ENCODE measurements at regions of chr2 and their contacts with region 1.

Region 1: GRCh38 chr2:74529357-74530238 is at the starts of genes AUP1 and HTRA2:
- DNase-seq: peak; percentile 89 to 99 (median 95)
- ATAC-seq: peak; percentile 94
- H3K4me3 ChIP-seq: peak within 1 kb of the TSS; percentile 96
- H3K27ac ChIP-seq: peak within 1 kb of the TSS; percentile 94
- H3K4me1 ChIP-seq: peaks cover 28 to 35% of the 10 kb centered on the region in 2 experiments
- H3K27me3 ChIP-seq: no peaks in the 10 kb centered on the region
- CTCF ChIP-seq: no peak
- EP300 ChIP-seq: 0 out of 2 replicates have a peak, but pooled peaks have one; percentile 15
- POLR2A ChIP-seq: peak; percentile 95
- RAD21 ChIP-seq: no peak
- polyA plus RNA-seq, gene AUP1: 70.7 to 113 TPM
- polyA plus RNA-seq, gene HTRA2: 66.7 to 71.2 TPM

Region 2: GRCh38 chr2:74250189-74250631 is 279.4 kb before region 1 on chr2:
- CTCF ChIA-PET with region 1: interaction called, 8 read pairs
- POLR2A ChIA-PET with region 1: no interaction called
- in situ Hi-C with region 1: no loop called
- intact Hi-C with region 1: loop called (anchors 5 kb)
- DNase-seq: peak; percentile 72 to 76 (median 75)
- ATAC-seq: peak; percentile 88
- H3K4me3 ChIP-seq: no peak overlapping the region
- H3K27ac ChIP-seq: no peak overlapping the region
- H3K4me1 ChIP-seq: peaks cover 0 to 3% of the 10 kb centered on the region in 2 experiments; a peak in 2 of 5 replicates
- H3K27me3 ChIP-seq: peaks cover 9 to 40% of the 10 kb centered on the region in 2 experiments; a peak in 4 of 5 replicates
- CTCF ChIP-seq: peak; percentile 75 to 87 (median 86)
- EP300 ChIP-seq: no peak; the same call in 1 of the 2 replicates
- POLR2A ChIP-seq: no peak
- RAD21 ChIP-seq: peak; percentile 72 to 89

Region 3: GRCh38 chr2:74458132-74458925 is 71.3 kb before region 1 on chr2 and contains the start of gene WBP1:
- CTCF ChIA-PET with region 1: no interaction called
- POLR2A ChIA-PET with region 1: interaction called, 12 read pairs
- in situ Hi-C with region 1: no loop called
- intact Hi-C with region 1: loop called (anchors 1 kb)
- DNase-seq: peak; percentile 80 to 98 (median 88)
- ATAC-seq: peak; percentile 90
- H3K4me3 ChIP-seq: peak within 1 kb of the TSS; percentile 53
- H3K27ac ChIP-seq: peak within 1 kb of the TSS; percentile 31; the same call in 1 of the 3 replicates
- H3K4me1 ChIP-seq: peaks cover 7 to 33% of the 10 kb centered on the region in 2 experiments
- H3K27me3 ChIP-seq: no peaks in the 10 kb centered on the region
- CTCF ChIP-seq: no peak
- EP300 ChIP-seq: no peak
- POLR2A ChIP-seq: peak; percentile 66
- RAD21 ChIP-seq: no peak
- polyA plus RNA-seq, gene WBP1: 1.9 to 2.1 TPM

Region 4: GRCh38 chr2:74507145-74507925 is 22.3 kb before region 1 on chr2 and contains the start of gene PCGF1:
- CTCF ChIA-PET with region 1: no interaction called
- POLR2A ChIA-PET with region 1: interaction called, 17 read pairs
- in situ Hi-C with region 1: no loop called
- intact Hi-C with region 1: loop called (anchors 1 kb)
- DNase-seq: peak; percentile 95 to 99 (median 96)
- ATAC-seq: peak; percentile 80
- H3K4me3 ChIP-seq: peak within 1 kb of the TSS; percentile 78
- H3K27ac ChIP-seq: peak within 1 kb of the TSS; percentile 97
- H3K4me1 ChIP-seq: peaks cover 36 to 55% of the 10 kb centered on the region in 2 experiments; a peak in 4 of 5 replicates
- H3K27me3 ChIP-seq: no peaks in the 10 kb centered on the region
- CTCF ChIP-seq: peak; percentile 42 to 57 (median 54); a peak in 5 of 6 replicates
- EP300 ChIP-seq: peak; percentile 17; the same call in 1 of the 2 replicates
- POLR2A ChIP-seq: peak; percentile 86
- RAD21 ChIP-seq: peak; percentile 15 to 30; a peak in 3 of 4 replicates
- polyA plus RNA-seq, gene PCGF1: 45.3 to 45.7 TPM

Region 5: DNA sequence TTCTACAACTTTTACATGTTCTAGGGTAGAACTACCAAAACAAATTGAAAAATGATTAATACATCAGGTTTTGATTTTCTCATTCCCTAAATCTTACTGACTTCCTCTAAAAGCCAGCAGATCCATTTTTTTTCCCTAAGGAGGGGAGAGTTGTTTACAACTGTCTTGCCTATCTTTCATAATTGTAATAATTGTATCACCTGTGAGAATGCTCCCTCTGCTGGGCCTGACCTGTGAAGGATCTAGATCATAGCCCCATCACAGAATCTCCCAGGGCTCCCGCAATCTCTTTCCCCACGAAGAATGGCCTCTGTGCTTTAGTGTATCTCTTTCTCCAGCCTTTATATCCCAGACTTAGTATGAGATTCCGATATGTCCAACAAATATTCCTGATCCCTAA is 15.0 kb after region 1 on chr2:
- CTCF ChIA-PET with region 1: no interaction called
- POLR2A ChIA-PET with region 1: interaction called, 25 read pairs
- in situ Hi-C with region 1: no loop called
- intact Hi-C with region 1: no loop called
- DNase-seq: peak in 2 of 4 experiments; percentile 32 to 35
- ATAC-seq: 0 out of 3 replicates have a peak, but pooled peaks have one; percentile 14
- H3K4me3 ChIP-seq: no peak overlapping the region
- H3K27ac ChIP-seq: no peak overlapping the region
- H3K4me1 ChIP-seq: peaks cover 18 to 37% of the 10 kb centered on the region in 2 experiments
- H3K27me3 ChIP-seq: no peaks in the 10 kb centered on the region
- CTCF ChIP-seq: peak; percentile 15 to 44 (median 24); a peak in 3 of 6 replicates
- EP300 ChIP-seq: no peak
- POLR2A ChIP-seq: no peak
- RAD21 ChIP-seq: peak in 1 of 2 experiments; percentile 49; a peak in 2 of 4 replicates

Region 6: GRCh38 chr2:74587664-74588277 is 58.2 kb after region 1 on chr2:
- CTCF ChIA-PET with region 1: interaction called, 4 read pairs
- POLR2A ChIA-PET with region 1: interaction called, 3 read pairs
- in situ Hi-C with region 1: no loop called
- intact Hi-C with region 1: loop called (anchors 5 kb)
- DNase-seq: peak; percentile 41 to 82 (median 62)
- ATAC-seq: peak; percentile 91
- H3K4me3 ChIP-seq: no peak overlapping the region
- H3K27ac ChIP-seq: no peak overlapping the region
- H3K4me1 ChIP-seq: peaks cover 3% of the 10 kb centered on the region in 2 experiments; a peak in 3 of 5 replicates
- H3K27me3 ChIP-seq: peaks cover 3 to 4% of the 10 kb centered on the region in 2 experiments; a peak in 2 of 5 replicates
- CTCF ChIP-seq: peak; percentile 73 to 90 (median 76)
- EP300 ChIP-seq: no peak
- POLR2A ChIP-seq: no peak
- RAD21 ChIP-seq: peak; percentile 89 to 91